Ascending aorta (tissue), 2 donors: ENCODE measurements at regions of chr22 and their contacts with region 1.

Region 1: DNA sequence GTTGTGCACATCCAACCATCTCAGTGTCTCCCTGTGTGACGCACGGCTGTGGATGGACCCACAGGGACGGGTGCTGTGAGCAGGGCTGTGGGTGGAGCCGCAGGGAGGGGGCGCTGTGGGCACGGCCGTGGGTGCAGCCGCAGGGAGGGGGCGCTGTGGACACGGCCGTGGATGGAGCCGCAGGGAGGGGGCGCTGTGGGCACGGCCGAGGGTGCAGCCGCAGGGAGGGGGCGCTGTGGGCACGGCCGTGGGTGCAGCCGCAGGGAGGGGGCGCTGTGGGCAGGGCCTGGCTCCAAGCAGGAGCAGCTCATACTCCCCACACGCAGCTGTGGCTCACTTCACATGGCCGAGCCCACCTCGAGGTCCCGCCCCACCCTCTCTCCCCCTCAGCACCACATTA is 6.0 kb upstream of the MAPK11 start:
- DNase-seq: peak in 1 of 2 donors; percentile 74
- H3K4me3 ChIP-seq: no peak overlapping the region
- H3K27ac ChIP-seq: no peak overlapping the region
- H3K4me1 ChIP-seq: peaks cover 5 to 9% of the 10 kb centered on the region in 2 donors
- H3K27me3 ChIP-seq: no peaks in the 10 kb centered on the region
- CTCF ChIP-seq: peak in 2 of 3 experiments; percentile 55 to 64

Region 2: DNA sequence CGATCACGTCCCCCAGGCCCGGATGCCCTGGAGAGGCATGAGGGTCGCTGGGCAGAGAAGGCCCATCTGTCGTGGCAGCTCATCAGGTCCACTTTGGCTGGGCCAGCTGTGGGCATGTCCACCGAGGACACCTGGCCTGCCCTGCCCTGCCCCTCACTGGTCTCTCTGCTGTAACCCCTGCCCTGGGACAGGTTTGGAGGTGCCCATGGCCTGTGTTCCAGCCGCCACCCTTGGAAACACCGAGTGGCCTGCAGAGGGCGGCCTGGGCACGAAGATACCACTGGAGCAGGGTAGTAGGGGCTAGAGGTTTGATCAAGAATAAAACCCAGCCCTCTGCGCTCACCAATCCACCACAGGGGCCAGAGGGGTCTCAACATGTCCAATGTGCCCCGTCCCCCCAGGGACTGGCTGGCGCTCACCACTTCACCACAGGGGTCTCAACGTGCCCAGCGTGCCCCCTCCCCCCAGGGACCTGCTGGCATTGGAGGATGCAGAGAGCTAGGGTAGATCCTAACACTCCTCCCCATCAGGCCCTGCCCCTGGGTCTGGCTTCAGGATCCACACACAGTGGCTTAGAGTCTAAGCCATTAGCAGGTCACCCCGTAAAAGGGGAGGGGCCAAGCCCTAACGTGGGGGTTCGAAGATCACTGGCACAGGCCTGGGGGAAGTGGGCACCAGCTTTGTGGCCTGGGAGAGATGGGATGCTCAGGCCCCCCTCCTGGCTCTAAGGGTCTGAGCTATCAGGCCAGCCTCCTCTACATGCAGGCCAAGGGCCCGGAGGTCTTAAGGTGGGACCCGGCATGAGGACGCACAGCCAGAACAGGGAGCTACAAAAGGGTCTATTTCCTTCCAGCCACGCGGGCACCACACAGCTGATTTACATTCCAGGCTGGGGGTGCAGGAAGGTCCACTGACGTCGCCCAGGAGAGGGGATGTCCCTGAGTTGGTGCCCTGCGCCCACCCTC is 23.8 kb before region 1 on chr22:
- intact Hi-C with region 1: loop called (anchors 2 kb)
- DNase-seq: peak in 1 of 2 donors; percentile 88
- H3K4me3 ChIP-seq: peak overlapping the region in 1 of 2 donors; percentile 82
- H3K27ac ChIP-seq: peak overlapping the region; percentile 66 to 71
- H3K4me1 ChIP-seq: peaks cover 11 to 19% of the 10 kb centered on the region in 2 donors
- H3K27me3 ChIP-seq: no peaks in the 10 kb centered on the region
- CTCF ChIP-seq: peak; percentile 60 to 74 (median 70)